Left ventricle myocardium superior (tissue), 1 donor: ENCODE measurements at regions of chr15 and their contacts with region 1.

Region 1: GRCh38 chr15:91186904-91187648 is 87.0 kb downstream of the SV2B start:
- DNase-seq: no peak
- ATAC-seq: no peak

Region 2: DNA sequence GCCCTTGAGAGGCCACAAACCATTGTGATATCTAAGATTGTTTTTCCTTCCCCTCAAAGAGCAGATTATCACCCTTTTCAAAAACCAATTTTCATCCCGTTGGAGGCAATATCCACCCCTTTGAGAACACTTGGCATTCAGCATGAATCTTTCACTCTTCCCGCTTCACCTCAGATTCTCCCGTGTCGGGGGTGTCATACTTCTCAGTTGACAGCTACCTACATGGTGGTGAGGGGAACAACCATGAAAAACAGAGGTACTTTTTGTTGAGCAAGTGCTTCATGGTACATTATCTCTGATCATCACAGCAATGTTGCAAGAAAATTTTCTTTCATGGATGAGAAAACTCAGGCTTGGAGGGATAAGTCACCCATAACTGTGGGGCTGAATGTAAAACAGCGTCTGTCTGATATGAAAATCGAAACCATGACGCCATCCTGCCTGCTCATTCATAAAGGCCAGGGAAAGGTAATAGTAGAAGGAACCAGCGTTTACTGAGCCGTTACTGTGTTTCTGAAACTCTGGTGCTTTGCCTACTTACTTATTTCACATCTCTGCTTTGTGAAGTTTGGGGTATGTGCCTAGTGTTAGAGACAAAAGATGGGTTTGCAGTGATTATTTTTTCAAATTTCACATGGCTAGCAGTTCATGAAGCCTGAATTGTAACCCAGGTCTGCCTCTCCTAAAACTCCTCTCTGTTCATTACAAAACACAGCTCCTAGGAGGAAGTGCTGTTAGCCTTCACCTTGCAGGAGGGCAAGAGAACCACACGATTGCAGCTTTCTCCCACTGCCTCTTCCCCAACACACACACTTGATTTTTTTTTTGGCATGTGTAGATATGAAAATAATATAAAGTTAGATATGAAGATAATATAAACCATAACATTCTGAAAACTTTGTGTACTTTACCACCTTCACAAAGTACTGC is 51.6 kb before region 1 on chr15:
- intact Hi-C with region 1: loop called (anchors 10 kb)
- DNase-seq: no peak
- ATAC-seq: no peak

Region 3: DNA sequence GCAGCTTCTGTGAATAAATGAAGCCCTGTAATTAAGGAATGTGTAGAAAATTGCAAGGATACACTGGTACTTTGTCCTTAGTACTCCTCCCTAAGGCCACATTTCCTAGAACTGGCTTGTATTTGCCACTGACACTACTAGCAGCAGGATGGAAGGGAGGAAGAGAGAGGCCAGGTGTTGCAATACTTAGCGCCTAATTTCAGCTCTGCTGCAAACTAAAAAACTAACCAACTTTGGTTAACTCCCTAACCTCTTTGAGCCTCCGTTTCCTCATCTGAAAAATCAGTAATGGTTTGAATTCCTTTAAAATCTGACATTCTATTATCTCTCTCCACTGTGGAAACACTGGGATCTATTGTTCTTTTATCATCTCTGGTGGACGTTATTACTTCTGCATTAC is 169.9 kb after region 1 on chr15:
- intact Hi-C with region 1: no loop called
- DNase-seq: no peak
- ATAC-seq: no peak